Caco-2 (cell line): ENCODE measurements at regions of chr2 and their contacts with region 1.

Region 1: DNA sequence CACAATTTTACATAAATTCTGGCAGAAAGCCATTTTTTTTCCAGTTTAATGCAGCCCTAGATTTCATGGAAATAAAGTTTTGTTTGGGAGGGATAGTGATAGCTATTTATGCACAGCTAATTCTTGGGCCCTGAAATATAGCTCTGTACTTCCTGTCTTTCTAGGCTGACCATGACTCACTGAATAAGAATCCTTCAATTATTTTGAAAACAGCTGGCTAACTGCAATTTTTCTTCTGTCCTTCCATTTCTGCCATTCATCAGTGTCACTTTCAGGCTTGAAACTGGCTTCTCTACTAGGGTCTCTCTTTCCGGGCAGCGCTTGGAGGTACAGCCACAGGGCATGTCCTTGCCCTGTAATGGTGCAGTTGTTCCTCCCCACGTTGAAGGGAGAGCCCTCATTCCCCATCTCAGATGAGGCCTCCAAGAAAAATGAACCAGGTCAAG is 97.1 kb upstream of the TMEM178A start:
- DNase-seq: no peak
- H3K4me3 ChIP-seq: no peak overlapping the region
- H3K4me3 Mint-ChIP-seq: peak overlapping the region; percentile 26
- H3K27ac Mint-ChIP-seq: peak overlapping the region; percentile 73
- H3K4me1 ChIP-seq: peaks cover 18% of the 10 kb centered on the region
- H3K4me1 Mint-ChIP-seq: peaks cover 27% of the 10 kb centered on the region
- H3K27me3 ChIP-seq: no peaks in the 10 kb centered on the region
- H3K27me3 Mint-ChIP-seq: no peaks in the 10 kb centered on the region
- CTCF ChIP-seq: no peak

Region 2: DNA sequence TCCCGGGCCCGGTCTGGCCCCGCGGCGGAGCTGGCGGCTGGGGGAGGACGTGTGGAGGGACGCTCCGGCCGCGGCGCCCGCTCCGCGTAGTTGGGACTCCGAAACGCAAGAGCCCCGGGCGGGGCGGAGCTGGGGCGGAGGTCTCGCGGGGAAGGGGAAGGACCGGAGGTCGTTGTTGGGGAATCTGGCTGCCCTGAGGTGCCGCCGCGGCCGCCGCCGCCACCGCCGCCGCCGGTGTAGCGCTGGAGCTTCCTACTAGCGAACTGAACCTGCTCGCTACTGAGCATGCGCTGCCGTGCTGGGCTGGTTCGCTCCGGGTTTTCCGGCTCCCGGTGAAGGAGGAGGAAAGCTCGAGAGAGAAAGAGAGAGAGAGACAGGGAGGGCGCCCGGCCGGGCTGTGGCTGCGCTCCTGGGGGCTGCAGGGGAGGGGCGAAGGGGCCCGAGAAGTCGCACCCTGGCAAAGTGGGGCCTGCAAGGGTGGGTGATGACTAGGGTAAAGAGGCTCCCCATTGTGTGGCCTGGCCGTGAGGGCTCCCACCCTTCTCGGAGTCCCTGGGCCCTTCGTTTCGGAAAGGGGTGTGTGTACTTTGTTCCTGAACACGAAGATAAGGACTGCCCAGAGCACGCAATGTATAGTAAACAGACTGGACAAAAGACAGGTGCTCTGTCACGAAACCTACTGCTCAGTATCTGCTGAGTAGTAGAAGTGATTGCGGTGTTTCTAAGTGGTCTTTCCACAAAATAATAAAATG is 447.6 kb before region 1 on chr2 and contains the start of gene SOS1:
- CTCF ChIA-PET with region 1: no interaction called
- POLR2A ChIA-PET with region 1: no interaction called
- intact Hi-C with region 1: no loop called
- DNase-seq: peak; percentile 98
- H3K4me3 ChIP-seq: peak within 1 kb of the TSS; percentile 62
- H3K4me3 Mint-ChIP-seq: peak within 1 kb of the TSS; percentile 91
- H3K27ac Mint-ChIP-seq: peak within 1 kb of the TSS; percentile 92
- H3K4me1 ChIP-seq: peaks cover 41% of the 10 kb centered on the region
- H3K4me1 Mint-ChIP-seq: peaks cover 34% of the 10 kb centered on the region
- H3K27me3 ChIP-seq: no peaks in the 10 kb centered on the region
- H3K27me3 Mint-ChIP-seq: no peaks in the 10 kb centered on the region
- CTCF ChIP-seq: no peak
- total RNA-seq, gene SOS1: 49.7 and 50.1 TPM in 2 replicates

Region 3: DNA sequence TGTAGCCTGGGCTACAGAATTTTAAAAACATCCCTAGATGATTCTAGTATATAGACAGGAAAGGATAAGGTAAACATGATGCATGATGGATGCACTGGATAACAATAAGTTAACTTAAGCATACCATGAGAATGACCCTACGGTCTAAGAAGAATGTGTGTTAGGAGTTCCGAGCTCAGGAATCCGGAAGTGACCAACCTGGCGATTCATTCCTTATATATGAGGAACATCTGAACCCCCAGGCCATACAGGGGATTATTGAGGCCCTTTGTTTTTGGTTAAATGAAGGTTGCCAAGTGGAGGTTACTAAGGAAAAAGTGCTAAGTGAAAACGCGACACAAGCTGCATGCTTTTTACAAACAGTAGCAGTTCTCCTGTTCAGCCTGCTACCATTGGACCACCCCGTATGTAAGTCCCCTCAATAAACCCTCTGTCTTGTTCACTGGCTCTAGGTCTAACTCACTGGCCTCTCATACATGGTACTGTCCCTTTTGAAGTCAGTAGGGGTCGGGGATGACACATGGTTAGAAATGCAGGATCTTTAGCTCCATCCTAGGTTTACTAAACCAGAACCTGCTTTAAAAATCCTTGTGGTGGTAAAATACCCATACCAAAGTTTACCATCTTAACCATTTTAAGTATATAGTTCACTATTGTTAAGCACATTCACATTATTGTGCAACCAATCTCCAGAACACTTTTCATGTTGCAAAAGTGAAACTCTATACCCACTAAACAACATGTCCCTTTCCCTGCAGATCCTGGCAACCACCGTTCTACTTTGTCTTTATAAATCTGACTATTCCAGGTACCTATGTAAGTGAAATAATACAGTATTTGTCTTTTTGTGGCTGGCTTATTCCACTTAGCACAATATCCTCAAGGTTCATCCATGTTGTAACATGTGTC is 20.5 kb before region 1 on chr2:
- CTCF ChIA-PET with region 1: no interaction called
- POLR2A ChIA-PET with region 1: no interaction called
- intact Hi-C with region 1: loop called (anchors 2 kb)
- DNase-seq: no peak
- H3K4me3 ChIP-seq: no peak overlapping the region
- H3K4me3 Mint-ChIP-seq: no peak overlapping the region
- H3K27ac Mint-ChIP-seq: no peak overlapping the region
- H3K4me1 ChIP-seq: peaks cover 7% of the 10 kb centered on the region
- H3K4me1 Mint-ChIP-seq: peaks cover 22% of the 10 kb centered on the region
- H3K27me3 ChIP-seq: no peaks in the 10 kb centered on the region
- H3K27me3 Mint-ChIP-seq: no peaks in the 10 kb centered on the region
- CTCF ChIP-seq: no peak